HEK293 (cell line): ENCODE measurements at regions of chr6 and their contacts with region 1.

Region 1: DNA sequence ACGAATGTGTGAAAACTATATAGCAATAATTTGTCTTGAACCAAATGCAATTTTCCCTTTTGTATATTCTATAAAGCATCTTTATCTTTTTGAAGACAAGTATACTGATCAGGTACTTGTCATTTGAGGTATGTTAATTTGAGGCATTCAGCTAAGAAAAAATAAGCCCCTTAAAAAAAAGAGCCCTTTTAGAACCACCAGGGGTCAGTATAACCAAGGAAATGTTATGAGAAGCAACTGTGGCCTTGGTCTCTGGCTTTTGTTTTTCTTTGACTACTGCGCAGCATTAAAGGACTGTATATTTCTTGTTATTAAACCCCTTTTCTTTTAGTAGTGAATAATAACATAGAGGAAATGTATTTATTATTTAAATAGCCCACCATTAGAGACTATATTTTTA is 43.1 kb downstream of the CD109 start:
- H3K4me3 ChIP-seq: no peak overlapping the region
- H3K27ac ChIP-seq: no peak overlapping the region
- H3K4me1 ChIP-seq: no peaks in the 10 kb centered on the region
- CTCF ChIP-seq: peak; percentile 33; the same call in 1 of the 2 replicates

Region 2: DNA sequence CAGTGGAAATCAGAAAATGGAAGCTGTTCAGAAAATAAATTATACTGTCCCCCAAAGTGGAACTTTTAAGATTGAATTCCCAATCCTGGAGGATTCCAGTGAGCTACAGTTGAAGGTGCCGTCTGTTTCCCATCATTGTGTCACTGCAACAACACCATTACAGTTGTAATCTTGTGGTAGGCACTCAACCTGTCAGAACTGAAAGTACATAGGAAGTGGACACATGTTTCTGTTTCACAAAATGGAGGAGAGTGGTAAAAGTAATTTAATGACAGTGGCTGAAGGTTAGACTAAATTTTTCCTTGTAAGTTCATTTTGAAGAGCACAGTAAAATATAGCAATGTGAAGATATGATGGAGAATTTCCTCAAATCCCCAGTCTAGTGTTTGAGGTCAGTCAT is 26.9 kb after region 1 on chr6:
- CTCF ChIA-PET with region 1: interaction called, 11 read pairs
- POLR2A ChIA-PET with region 1: no interaction called
- H3K4me3 ChIP-seq: no peak overlapping the region
- H3K27ac ChIP-seq: no peak overlapping the region
- H3K4me1 ChIP-seq: no peaks in the 10 kb centered on the region
- CTCF ChIP-seq: no peak

Region 3: GRCh38 chr6:74100719-74101287 is 361.7 kb after region 1 on chr6:
- CTCF ChIA-PET with region 1: no interaction called
- POLR2A ChIA-PET with region 1: no interaction called
- H3K4me3 ChIP-seq: no peak overlapping the region
- H3K27ac ChIP-seq: no peak overlapping the region
- H3K4me1 ChIP-seq: no peaks in the 10 kb centered on the region
- CTCF ChIP-seq: no peak